AG04450 (cell line): ENCODE measurements at regions of chr21 and their contacts with region 1.

Region 1: GRCh38 chr21:35256467-35256988 is 207.4 kb upstream of the RUNX1 start:
- DNase-seq: peak; percentile 98
- H3K4me3 ChIP-seq: 0 out of 2 replicates have a peak overlapping the region, but pooled peaks have one; percentile 5
- H3K27ac ChIP-seq: peak overlapping the region; percentile 71
- H3K27me3 ChIP-seq: no peaks in the 10 kb centered on the region
- CTCF ChIP-seq: 0 out of 2 replicates have a peak, but pooled peaks have one; percentile 8

Region 2: DNA sequence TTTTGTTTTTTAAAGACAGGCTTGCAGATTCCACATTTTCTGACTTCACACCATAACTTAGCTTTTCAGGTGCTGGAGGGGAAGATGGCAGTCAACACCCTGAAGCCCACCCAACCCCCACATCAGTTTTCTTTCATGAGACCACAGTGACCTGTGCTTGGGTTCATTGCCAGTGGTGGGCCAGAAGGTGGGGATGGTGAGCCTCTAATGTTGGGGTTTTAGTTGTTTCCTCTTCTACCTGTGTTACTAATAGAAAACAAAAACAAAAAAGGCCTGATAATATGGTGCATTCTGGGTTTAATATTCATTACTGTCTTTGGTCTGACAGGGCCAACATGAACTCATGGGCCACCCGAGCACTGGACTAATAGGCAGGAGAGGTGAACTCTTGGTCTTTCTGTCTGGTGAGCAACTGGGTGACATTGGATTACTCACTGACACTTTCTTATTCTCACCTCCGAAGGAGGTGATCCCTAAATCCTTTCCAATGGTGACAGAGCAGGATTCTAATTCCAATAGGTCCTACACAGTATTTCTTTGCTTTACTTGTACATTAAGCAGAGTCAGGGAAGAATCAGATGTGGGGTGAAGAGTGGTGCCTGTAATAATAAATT is 454.9 kb before region 1 on chr21:
- CTCF ChIA-PET with region 1: no interaction called
- POLR2A ChIA-PET with region 1: no interaction called
- DNase-seq: no peak
- H3K4me3 ChIP-seq: no peak overlapping the region
- H3K27ac ChIP-seq: no peak overlapping the region
- H3K27me3 ChIP-seq: no peaks in the 10 kb centered on the region
- CTCF ChIP-seq: peak; percentile 23; the same call in 1 of the 2 replicates

Region 3: GRCh38 chr21:34888569-34889319 is 367.8 kb before region 1 on chr21:
- CTCF ChIA-PET with region 1: interaction called, 6 read pairs
- POLR2A ChIA-PET with region 1: interaction called, 12 read pairs
- DNase-seq: peak; percentile 92
- H3K4me3 ChIP-seq: peak overlapping the region; percentile 92
- H3K27ac ChIP-seq: peak overlapping the region; percentile 99
- H3K27me3 ChIP-seq: no peaks in the 10 kb centered on the region
- CTCF ChIP-seq: no peak

Region 4: GRCh38 chr21:35920436-35920835 is 663.9 kb after region 1 on chr21:
- CTCF ChIA-PET with region 1: no interaction called
- POLR2A ChIA-PET with region 1: no interaction called
- DNase-seq: no peak
- H3K4me3 ChIP-seq: no peak overlapping the region
- H3K27ac ChIP-seq: no peak overlapping the region
- H3K27me3 ChIP-seq: no peaks in the 10 kb centered on the region
- CTCF ChIP-seq: no peak